ENCODE measurements at regions of chr21 and their contacts with region 1.

Region 1: GRCh38 chr21:28745131-28746016 is 247.3 kb downstream of the LTN1 start:
- DNase-seq: peak; percentile 44 to 66
- H3K4me3 ChIP-seq: peak overlapping the region in 1 of 4 experiments; percentile 8; a peak in 1 of 8 replicates
- H3K27ac ChIP-seq: no peak overlapping the region
- H3K4me1 ChIP-seq: no peaks in the 10 kb centered on the region
- H3K27me3 ChIP-seq: no peaks in the 10 kb centered on the region
- CTCF ChIP-seq: peak in 2 of 3 experiments; percentile 77 to 86; a peak in 3 of 4 replicates
- EP300 ChIP-seq: no peak
- POLR2A ChIP-seq: no peak
- RAD21 ChIP-seq: peak; percentile 99 to 100

Region 2: DNA sequence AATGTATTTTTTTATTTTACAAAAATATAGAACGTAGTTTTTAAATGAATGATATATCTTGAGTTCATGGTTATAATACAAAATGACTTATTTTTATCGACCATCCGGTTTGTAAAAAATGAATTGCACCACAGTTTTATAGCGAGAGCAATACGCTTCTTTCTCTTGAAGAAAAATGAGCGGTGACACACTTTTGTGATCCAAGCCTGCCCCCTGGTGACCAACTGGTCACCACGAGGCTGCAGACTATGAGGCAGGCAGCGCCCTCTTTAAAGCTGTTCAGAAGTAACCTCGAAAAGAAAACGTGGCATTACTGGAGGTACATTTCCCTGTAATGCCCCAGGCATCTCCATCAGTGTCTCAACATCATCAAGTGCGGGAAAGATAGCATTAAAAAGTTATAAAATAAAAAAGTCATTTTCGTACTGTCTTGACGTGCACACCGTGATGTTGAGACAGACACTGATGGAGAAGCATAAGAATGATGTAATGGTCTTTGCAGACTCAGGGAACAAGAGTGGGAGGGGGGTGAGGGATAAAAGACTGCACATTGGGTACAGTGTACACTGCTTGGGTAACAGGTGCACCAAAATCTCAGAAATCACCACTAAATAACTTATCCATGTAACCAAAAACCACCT is 1044.3 kb before region 1 on chr21:
- CTCF ChIA-PET with region 1: interaction called, 12 read pairs
- POLR2A ChIA-PET with region 1: no interaction called
- DNase-seq: peak; percentile 49 to 79
- H3K4me3 ChIP-seq: no peak overlapping the region
- H3K27ac ChIP-seq: no peak overlapping the region
- H3K4me1 ChIP-seq: no peaks in the 10 kb centered on the region
- H3K27me3 ChIP-seq: no peaks in the 10 kb centered on the region
- CTCF ChIP-seq: peak; percentile 78 to 96 (median 83)
- EP300 ChIP-seq: no peak
- POLR2A ChIP-seq: no peak
- RAD21 ChIP-seq: peak; percentile 95 to 96

Region 3: GRCh38 chr21:28336314-28336713 is 409.1 kb before region 1 on chr21:
- CTCF ChIA-PET with region 1: interaction called, 37 read pairs
- POLR2A ChIA-PET with region 1: no interaction called
- DNase-seq: no peak
- H3K4me3 ChIP-seq: no peak overlapping the region
- H3K27ac ChIP-seq: no peak overlapping the region
- H3K4me1 ChIP-seq: peaks cover 0 to 2% (median 0%) of the 10 kb centered on the region in 4 experiments; a peak in 1 of 7 replicates
- H3K27me3 ChIP-seq: no peaks in the 10 kb centered on the region
- CTCF ChIP-seq: peak in 1 of 3 experiments; percentile 38; a peak in 2 of 4 replicates
- EP300 ChIP-seq: no peak
- POLR2A ChIP-seq: no peak
- RAD21 ChIP-seq: peak; percentile 76 to 79

Region 4: GRCh38 chr21:28480470-28480869 is 264.9 kb before region 1 on chr21:
- CTCF ChIA-PET with region 1: no interaction called
- POLR2A ChIA-PET with region 1: no interaction called
- DNase-seq: no peak
- H3K4me3 ChIP-seq: no peak overlapping the region
- H3K27ac ChIP-seq: no peak overlapping the region
- H3K4me1 ChIP-seq: no peaks in the 10 kb centered on the region
- H3K27me3 ChIP-seq: no peaks in the 10 kb centered on the region; a peak in 1 of 7 replicates
- CTCF ChIP-seq: no peak
- EP300 ChIP-seq: no peak
- POLR2A ChIP-seq: no peak
- RAD21 ChIP-seq: no peak

Region 5: GRCh38 chr21:28516991-28517592 is 228.3 kb before region 1 on chr21:
- CTCF ChIA-PET with region 1: interaction called, 40 read pairs
- POLR2A ChIA-PET with region 1: no interaction called
- DNase-seq: peak; percentile 70 to 85
- H3K4me3 ChIP-seq: no peak overlapping the region
- H3K27ac ChIP-seq: no peak overlapping the region
- H3K4me1 ChIP-seq: 0 out of 7 replicates have a peak, but pooled peaks cover 0 to 2% (median 0%) of the 10 kb centered on the region in 4 experiments
- H3K27me3 ChIP-seq: no peaks in the 10 kb centered on the region
- CTCF ChIP-seq: peak; percentile 91 to 97 (median 91)
- EP300 ChIP-seq: no peak; a peak in 1 of 3 replicates
- POLR2A ChIP-seq: no peak
- RAD21 ChIP-seq: peak; percentile 83 to 88

Region 6: GRCh38 chr21:28719723-28720122 is 25.7 kb before region 1 on chr21:
- CTCF ChIA-PET with region 1: interaction called, 10 read pairs
- POLR2A ChIA-PET with region 1: no interaction called
- DNase-seq: no peak
- H3K4me3 ChIP-seq: no peak overlapping the region
- H3K27ac ChIP-seq: no peak overlapping the region
- H3K4me1 ChIP-seq: no peaks in the 10 kb centered on the region
- H3K27me3 ChIP-seq: no peaks in the 10 kb centered on the region
- CTCF ChIP-seq: no peak
- EP300 ChIP-seq: no peak
- POLR2A ChIP-seq: no peak
- RAD21 ChIP-seq: no peak

Measured in H1 (cell line).